ENCODE measurements at regions of chr5 and their contacts with region 1.

Region 1: DNA sequence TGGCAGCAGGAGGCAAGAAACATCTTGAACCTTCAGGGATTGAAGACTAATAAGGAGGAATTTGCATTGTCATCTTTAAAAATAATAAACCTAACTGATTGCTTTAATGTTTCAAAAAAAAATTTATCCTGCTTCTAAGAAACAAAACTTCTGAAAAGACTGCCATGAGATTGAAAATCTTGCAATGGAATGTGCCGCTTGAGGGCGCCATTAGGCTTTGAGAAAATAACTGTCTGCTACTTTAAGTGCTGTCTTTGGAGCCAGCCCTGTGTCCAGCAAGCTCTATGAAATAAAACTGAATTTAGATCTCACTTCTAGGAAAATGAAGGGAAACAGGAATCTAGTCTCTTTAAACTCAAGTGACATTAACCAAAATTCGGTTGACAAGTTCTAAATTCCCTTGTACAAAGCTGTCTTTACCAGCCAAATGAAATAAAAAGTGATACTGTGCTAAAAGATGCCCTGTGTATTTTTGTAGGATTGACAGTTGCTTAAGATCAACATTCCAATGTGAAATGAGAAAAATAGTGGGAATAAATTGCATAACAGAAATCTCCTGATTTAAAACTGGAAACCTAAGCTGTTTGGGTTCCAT is 79.4 kb downstream of the ESM1 start:
- DNase-seq: no peak
- ATAC-seq: no peak
- H3K4me3 ChIP-seq: no peak overlapping the region
- H3K27ac ChIP-seq: no peak overlapping the region
- H3K4me1 ChIP-seq: peaks cover 0 to 4% of the 10 kb centered on the region in 2 donors
- H3K27me3 ChIP-seq: peaks cover 0 to 5% (median 0%) of the 10 kb centered on the region in 3 donors
- CTCF ChIP-seq: peak in 2 of 5 experiments; percentile 46 to 56
- POLR2A ChIP-seq: no peak

Region 2: GRCh38 chr5:55146543-55147151 is 240.6 kb after region 1 on chr5:
- in situ Hi-C with region 1: loop called in 2 of 4 experiments (anchors 5 to 10 kb)
- intact Hi-C with region 1: loop called (anchors 10 kb)
- DNase-seq: peak; percentile 42 to 66
- ATAC-seq: peak; percentile 77 to 98
- H3K4me3 ChIP-seq: no peak overlapping the region
- H3K27ac ChIP-seq: no peak overlapping the region
- H3K4me1 ChIP-seq: peaks cover 0 to 4% of the 10 kb centered on the region in 2 donors
- H3K27me3 ChIP-seq: peaks cover 0 to 3% (median 0%) of the 10 kb centered on the region in 3 donors
- CTCF ChIP-seq: peak; percentile 64 to 92 (median 80)
- POLR2A ChIP-seq: no peak